ENCODE measurements at regions of chr18 and their contacts with region 1.

Region 1: GRCh38 chr18:32018331-32019250 is at the start of gene RNF125:
- DNase-seq: peak; percentile 93
- ATAC-seq: peak; percentile 76
- H3K4me3 Mint-ChIP-seq: peak within 1 kb of the TSS; percentile 90
- H3K27ac Mint-ChIP-seq: peak within 1 kb of the TSS; percentile 94
- H3K4me1 Mint-ChIP-seq: peaks cover 42% of the 10 kb centered on the region
- H3K27me3 Mint-ChIP-seq: no peaks in the 10 kb centered on the region
- total RNA-seq, gene RNF125: 21.6 to 22.2 TPM

Region 2: GRCh38 chr18:31942999-31943865 is 75.4 kb before region 1 on chr18 and contains the start of gene TRAPPC8:
- CTCF ChIA-PET with region 1: interaction called, 6 read pairs
- POLR2A ChIA-PET with region 1: interaction called, 12 read pairs
- intact Hi-C with region 1: loop called (anchors 1 kb)
- DNase-seq: peak; percentile 95
- ATAC-seq: peak; percentile 85
- H3K4me3 Mint-ChIP-seq: peak within 1 kb of the TSS; percentile 99
- H3K27ac Mint-ChIP-seq: peak within 1 kb of the TSS; percentile 100
- H3K4me1 Mint-ChIP-seq: peaks cover 37% of the 10 kb centered on the region
- H3K27me3 Mint-ChIP-seq: no peaks in the 10 kb centered on the region
- total RNA-seq, gene TRAPPC8: 23.3 to 24.2 TPM

Region 3: DNA sequence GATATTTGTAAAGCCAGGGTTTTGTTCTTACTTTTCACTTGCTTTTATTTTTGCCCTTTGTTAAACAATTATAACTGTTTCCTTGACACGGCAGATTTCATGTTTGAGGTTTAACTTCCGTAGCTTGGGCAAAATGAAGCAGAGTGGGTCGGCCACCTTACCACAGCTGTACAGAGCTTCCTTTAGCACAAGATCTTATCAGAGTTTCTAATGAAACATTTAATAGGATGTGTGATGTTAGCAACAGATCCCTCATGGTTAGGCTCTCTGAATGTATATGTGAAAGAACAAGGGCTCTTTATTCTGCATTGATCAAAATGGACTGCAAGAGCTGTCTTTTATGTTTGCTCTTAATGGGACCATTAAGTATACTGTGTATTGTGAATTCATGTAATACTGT is 22.3 kb after region 1 on chr18:
- CTCF ChIA-PET with region 1: interaction called, 5 read pairs
- POLR2A ChIA-PET with region 1: interaction called, 11 read pairs
- intact Hi-C with region 1: loop called (anchors 1 to 2 kb)
- DNase-seq: peak; percentile 58
- ATAC-seq: peak; percentile 67
- H3K4me3 Mint-ChIP-seq: peak overlapping the region; percentile 47
- H3K27ac Mint-ChIP-seq: peak overlapping the region; percentile 87
- H3K4me1 Mint-ChIP-seq: peaks cover 58% of the 10 kb centered on the region
- H3K27me3 Mint-ChIP-seq: no peaks in the 10 kb centered on the region

Region 4: GRCh38 chr18:32072321-32072720 is 53.7 kb after region 1 on chr18:
- CTCF ChIA-PET with region 1: interaction called, 7 read pairs
- POLR2A ChIA-PET with region 1: no interaction called
- intact Hi-C with region 1: loop called (anchors 5 kb)
- DNase-seq: no peak
- ATAC-seq: no peak
- H3K4me3 Mint-ChIP-seq: no peak overlapping the region
- H3K27ac Mint-ChIP-seq: no peak overlapping the region
- H3K4me1 Mint-ChIP-seq: peaks cover 23% of the 10 kb centered on the region
- H3K27me3 Mint-ChIP-seq: no peaks in the 10 kb centered on the region

Region 5: DNA sequence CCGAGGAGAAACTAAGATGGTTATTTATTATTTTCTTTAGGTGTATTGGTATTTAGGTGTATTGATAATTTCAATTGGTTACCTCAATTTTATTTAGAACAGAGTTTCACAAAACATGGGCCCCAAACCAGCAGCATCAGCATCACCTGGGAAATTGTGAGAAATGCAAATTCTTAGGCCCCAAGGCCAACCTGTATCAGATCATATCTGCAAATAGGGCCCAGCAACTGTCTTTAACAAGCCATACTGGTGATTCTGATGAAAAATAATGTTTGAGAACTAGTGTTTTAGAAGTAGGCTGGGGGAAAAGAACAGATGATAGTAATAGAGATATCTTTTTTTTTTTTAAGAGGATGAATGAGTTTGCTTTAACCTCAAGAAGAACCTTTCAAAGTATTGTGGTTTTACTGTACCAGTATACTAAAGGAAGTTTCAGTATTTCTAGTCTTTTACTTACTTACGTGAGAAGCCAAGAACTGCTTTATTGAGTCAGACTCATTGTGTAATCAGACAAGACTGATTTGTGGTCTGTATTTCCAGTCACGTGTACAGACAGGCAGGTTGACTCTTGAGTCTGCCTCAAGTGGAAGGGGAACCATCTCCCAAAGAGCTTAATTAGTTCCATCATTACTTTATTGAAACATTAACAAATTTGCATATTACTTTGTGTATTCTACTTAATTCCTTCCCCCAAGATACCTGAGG is 512.5 kb after region 1 on chr18:
- CTCF ChIA-PET with region 1: no interaction called
- POLR2A ChIA-PET with region 1: no interaction called
- intact Hi-C with region 1: loop called in 1 of 2 experiments (anchors 5 kb)
- DNase-seq: peak; percentile 43
- ATAC-seq: peak; percentile 96
- H3K4me3 Mint-ChIP-seq: no peak overlapping the region
- H3K27ac Mint-ChIP-seq: peak overlapping the region; percentile 14
- H3K4me1 Mint-ChIP-seq: peaks cover 17% of the 10 kb centered on the region
- H3K27me3 Mint-ChIP-seq: peaks cover 15% of the 10 kb centered on the region

Region 6: DNA sequence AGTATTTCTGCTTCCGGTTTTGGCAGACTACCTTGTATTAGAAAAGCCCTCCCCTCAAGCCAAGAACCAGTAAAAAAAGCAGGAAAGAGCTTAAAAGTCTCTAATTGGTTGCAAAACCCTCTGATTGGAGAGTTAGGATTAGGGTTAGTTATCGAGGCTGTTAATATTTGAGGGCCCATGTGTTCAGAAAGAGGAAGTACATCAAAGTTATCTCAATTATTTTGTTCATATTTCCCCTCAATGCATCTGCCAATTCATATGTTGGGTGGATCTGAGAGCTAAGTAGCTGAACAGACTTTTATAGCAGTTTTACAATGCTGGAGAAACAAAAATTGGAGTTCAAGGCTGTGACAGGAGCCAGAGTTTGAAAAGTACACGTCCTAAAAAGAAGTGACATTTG is 797.3 kb after region 1 on chr18:
- CTCF ChIA-PET with region 1: no interaction called
- POLR2A ChIA-PET with region 1: no interaction called
- intact Hi-C with region 1: no loop called
- DNase-seq: no peak
- ATAC-seq: no peak
- H3K4me3 Mint-ChIP-seq: no peak overlapping the region
- H3K27ac Mint-ChIP-seq: no peak overlapping the region
- H3K4me1 Mint-ChIP-seq: no peaks in the 10 kb centered on the region
- H3K27me3 Mint-ChIP-seq: peaks cover 3% of the 10 kb centered on the region

Measured in activated CD4-positive, alpha-beta T cell treated with anti-CD3 and anti-CD28 coated beads for 36 hours (primary cell).